Heart right ventricle (tissue), 16 donors: ENCODE measurements at regions of chr4 and their contacts with region 1.

Region 1: GRCh38 chr4:57158221-57158620 is 48.0 kb upstream of the IGFBP7 start:
- DNase-seq: no peak
- ATAC-seq: peak in 3 of 8 donors; percentile 30 to 49 (median 34)
- H3K4me3 ChIP-seq: no peak overlapping the region
- H3K27ac ChIP-seq: no peak overlapping the region
- H3K4me1 ChIP-seq: peaks cover 0 to 8% (median 0%) of the 10 kb centered on the region in 9 donors
- H3K27me3 ChIP-seq: no peaks in the 10 kb centered on the region
- CTCF ChIP-seq: peak in 2 of 9 donors; percentile 9 to 28

Region 2: DNA sequence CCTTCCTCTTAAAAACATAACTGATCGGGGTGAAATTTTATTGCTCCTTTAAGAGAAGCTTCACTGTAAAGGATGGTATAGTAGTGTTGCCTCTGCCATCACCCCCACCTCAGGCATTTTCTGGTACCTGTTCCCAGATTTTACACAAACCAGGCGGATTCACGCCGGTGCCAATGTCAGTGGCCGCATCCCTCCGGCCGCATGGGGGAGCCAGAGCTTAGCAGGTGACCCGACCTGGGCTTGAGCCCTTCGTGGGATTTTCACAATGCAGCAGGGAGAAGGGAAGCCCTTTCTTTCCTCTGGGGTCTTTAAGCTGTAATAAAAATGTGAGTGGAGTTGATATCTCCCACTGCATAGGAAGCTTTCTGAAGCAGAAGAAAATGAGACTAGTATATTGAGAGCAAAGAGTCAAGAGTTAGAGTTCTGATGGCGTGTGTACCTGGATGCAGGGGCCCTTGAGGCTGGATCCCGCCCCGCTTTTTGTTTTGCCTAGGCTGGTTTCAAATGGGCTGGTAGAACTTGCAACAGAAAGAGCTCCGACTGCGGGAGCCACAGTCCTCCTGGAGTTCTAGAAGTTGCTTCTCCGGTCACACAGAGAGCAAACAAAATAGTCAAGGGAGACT is 120.1 kb before region 1 on chr4:
- intact Hi-C with region 1: loop called (anchors 2 to 10 kb)
- DNase-seq: peak; percentile 60 to 76
- ATAC-seq: peak; percentile 37 to 82 (median 63)
- H3K4me3 ChIP-seq: no peak overlapping the region
- H3K27ac ChIP-seq: peak overlapping the region in 2 of 10 donors; percentile 20 to 93
- H3K4me1 ChIP-seq: peaks cover 10 to 51% (median 23%) of the 10 kb centered on the region in 9 donors
- H3K27me3 ChIP-seq: no peaks in the 10 kb centered on the region
- CTCF ChIP-seq: peak; percentile 66 to 92 (median 81)